ENCODE measurements at regions of chr19 and their contacts with region 1.

Region 1: GRCh38 chr19:56121180-56122167 is at the start of gene ZNF787:
- DNase-seq: peak; percentile 82
- ATAC-seq: peak; percentile 91
- H3K4me3 ChIP-seq: peak within 1 kb of the TSS; percentile 75 to 91
- H3K27ac ChIP-seq: peak within 1 kb of the TSS; percentile 99
- H3K4me1 ChIP-seq: peaks cover 38% of the 10 kb centered on the region
- H3K27me3 ChIP-seq: no peaks in the 10 kb centered on the region
- CTCF ChIP-seq: no peak
- total RNA-seq, gene ZNF787: 132 TPM

Region 2: GRCh38 chr19:56097306-56097705 is 24.2 kb before region 1 on chr19:
- CTCF ChIA-PET with region 1: no interaction called
- POLR2A ChIA-PET with region 1: no interaction called
- in situ Hi-C with region 1: no loop called
- intact Hi-C with region 1: no loop called
- DNase-seq: no peak
- ATAC-seq: no peak
- H3K4me3 ChIP-seq: no peak overlapping the region
- H3K27ac ChIP-seq: no peak overlapping the region
- H3K4me1 ChIP-seq: peaks cover 8% of the 10 kb centered on the region
- H3K27me3 ChIP-seq: no peaks in the 10 kb centered on the region
- CTCF ChIP-seq: no peak

Region 3: DNA sequence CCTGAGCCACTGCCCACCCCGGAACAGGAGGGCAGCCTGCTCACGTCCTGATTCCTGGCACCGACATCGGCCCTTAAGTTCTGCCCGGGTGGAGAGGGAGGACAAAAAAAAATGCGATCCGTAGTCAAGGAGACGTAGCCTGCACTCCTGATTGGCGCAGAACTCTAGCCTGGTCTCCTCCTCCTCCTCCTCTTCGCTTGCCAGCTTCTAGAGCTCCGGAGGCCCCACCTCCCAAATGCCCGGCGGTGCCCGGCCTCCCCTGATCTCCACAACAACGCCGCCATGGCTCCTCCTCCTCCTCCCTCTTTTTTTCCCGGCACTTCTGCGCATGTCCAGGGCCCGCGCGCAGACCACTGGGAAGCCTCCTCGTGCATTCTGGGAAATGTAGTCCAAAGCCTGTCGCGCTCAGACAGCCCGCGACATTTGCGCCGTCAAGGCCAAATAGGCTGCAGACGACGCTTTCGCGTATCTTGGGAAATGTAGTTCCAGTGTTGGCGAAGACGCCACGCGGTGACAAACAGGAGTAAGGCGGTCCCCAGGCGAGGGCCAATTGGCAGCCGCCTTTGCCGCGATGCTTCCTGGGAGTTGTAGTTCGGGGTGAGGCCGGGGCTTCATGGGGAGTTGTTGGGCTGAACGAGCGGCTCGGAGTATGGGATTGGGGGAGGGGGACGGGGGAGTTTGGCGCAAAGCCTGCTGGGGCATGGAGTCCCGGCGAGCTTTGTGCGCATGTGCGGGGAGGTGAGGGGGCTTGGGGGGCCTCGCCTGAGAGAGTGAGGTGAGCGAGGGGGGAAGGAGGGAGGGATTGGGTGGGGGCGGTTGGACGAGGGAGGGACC is 19.3 kb after region 1 on chr19 and contains the start of gene ZNF444:
- CTCF ChIA-PET with region 1: no interaction called
- POLR2A ChIA-PET with region 1: interaction called, 18 read pairs
- in situ Hi-C with region 1: no loop called
- intact Hi-C with region 1: no loop called
- DNase-seq: peak; percentile 97
- ATAC-seq: peak; percentile 95
- H3K4me3 ChIP-seq: peak within 1 kb of the TSS; percentile 61 to 71
- H3K27ac ChIP-seq: peak within 1 kb of the TSS; percentile 84
- H3K4me1 ChIP-seq: peaks cover 23% of the 10 kb centered on the region
- H3K27me3 ChIP-seq: no peaks in the 10 kb centered on the region
- CTCF ChIP-seq: no peak
- total RNA-seq, gene ZNF444: 81.5 TPM

Region 4: DNA sequence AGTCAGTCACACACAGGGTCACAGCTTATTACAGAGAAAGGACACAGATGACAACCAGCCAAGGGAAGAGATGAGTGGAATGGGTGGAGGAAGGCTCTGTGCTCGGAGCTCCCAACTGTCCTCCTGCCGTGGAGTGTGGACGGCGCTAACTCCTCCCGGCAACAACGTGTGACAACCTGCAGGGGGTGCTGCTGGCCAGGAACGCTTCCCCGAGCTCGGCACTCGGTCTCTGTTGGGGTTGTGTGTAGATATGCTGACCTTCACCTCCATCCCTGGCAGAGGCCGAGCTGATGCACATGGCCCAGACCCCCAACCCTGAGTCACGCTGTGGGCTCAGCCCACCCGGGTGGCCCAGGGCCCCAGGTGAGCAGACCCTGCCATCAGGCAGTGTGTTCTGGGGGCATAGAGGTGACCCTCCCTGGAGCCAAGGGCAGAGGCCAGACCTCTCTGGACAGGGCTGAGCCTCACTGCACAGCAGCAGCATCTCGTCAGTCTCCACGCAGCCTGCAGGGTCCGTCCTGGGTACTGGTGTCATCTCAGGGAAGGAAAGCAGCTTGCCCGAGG is 33.7 kb after region 1 on chr19:
- CTCF ChIA-PET with region 1: interaction called, 10 read pairs
- POLR2A ChIA-PET with region 1: no interaction called
- in situ Hi-C with region 1: no loop called
- intact Hi-C with region 1: no loop called
- DNase-seq: no peak
- ATAC-seq: peak; percentile 76
- H3K4me3 ChIP-seq: no peak overlapping the region
- H3K27ac ChIP-seq: no peak overlapping the region
- H3K4me1 ChIP-seq: no peaks in the 10 kb centered on the region
- H3K27me3 ChIP-seq: no peaks in the 10 kb centered on the region
- CTCF ChIP-seq: no peak; the same call in 1 of the 2 replicates

Region 5: GRCh38 chr19:56170261-56170660 is 48.8 kb after region 1 on chr19:
- CTCF ChIA-PET with region 1: no interaction called
- POLR2A ChIA-PET with region 1: interaction called, 10 read pairs
- in situ Hi-C with region 1: no loop called
- intact Hi-C with region 1: no loop called
- DNase-seq: peak; percentile 39
- ATAC-seq: no peak
- H3K4me3 ChIP-seq: no peak overlapping the region
- H3K27ac ChIP-seq: no peak overlapping the region
- H3K4me1 ChIP-seq: no peaks in the 10 kb centered on the region
- H3K27me3 ChIP-seq: no peaks in the 10 kb centered on the region
- CTCF ChIP-seq: no peak

Region 6: DNA sequence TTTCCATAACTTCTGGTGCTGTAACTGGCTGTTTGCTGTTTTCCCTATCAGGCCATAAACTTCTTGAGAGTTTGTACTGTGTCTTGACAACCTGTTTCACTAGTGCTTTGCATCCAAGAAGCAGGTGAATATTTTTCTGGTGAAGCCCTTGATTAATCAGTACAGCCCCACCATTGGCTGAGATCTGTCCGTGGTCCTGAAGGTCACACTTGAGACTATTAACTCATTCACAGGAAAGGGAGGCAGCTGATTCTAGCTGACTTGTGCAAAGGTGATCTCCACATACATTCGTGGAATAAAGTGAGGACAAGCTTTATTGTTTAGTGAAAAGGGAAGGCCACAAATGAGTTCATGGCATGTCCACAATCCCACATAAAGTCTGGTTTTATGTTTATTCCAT is 611.5 kb after region 1 on chr19:
- CTCF ChIA-PET with region 1: no interaction called
- POLR2A ChIA-PET with region 1: no interaction called
- in situ Hi-C with region 1: no loop called
- intact Hi-C with region 1: no loop called
- DNase-seq: no peak
- ATAC-seq: no peak
- H3K4me3 ChIP-seq: no peak overlapping the region
- H3K27ac ChIP-seq: no peak overlapping the region
- H3K4me1 ChIP-seq: no peaks in the 10 kb centered on the region
- H3K27me3 ChIP-seq: no peaks in the 10 kb centered on the region; the same call in 1 of the 2 replicates
- CTCF ChIP-seq: no peak